ENCODE measurements at regions of chr12 and their contacts with region 1.

Region 1: DNA sequence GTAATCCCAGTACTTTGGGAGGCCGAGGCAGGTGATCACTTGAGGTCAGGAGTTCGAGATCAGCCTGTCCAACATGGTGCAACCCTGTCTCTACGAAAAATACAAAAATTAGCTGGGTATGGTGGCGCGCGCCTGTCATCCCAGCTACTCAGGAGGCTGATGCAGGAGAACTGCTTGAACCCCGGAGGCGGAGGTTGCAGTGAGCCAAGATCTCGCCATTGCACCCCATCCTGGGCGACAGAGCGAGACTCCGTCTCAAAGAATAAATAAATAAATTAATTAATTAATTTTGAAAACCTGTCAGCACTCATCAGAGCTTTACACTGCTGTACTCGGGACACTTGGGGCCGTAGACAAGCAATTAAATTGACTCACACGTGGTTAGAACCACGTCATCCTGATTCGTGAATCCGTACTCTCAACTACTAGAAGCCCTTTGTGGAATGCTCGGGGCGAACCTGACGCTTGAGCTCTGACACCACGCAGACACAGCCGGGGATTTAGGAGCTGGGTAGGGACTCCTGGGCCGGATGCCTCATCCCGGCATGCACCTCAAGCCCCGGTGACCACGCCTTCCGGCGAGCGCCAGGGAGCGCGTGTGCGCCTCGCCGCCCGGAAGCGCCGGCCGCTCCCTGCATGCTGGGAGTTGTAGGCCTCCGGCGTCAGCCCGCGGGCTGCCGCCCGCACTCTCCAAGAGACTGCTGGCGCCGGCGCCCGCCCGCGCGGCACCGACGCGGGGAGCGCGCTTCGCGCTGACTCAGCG is at the start of gene XPOT:
- DNase-seq: peak; percentile 93 to 95
- ATAC-seq: peak; percentile 96 to 99 (median 98)
- H3K4me3 ChIP-seq: peak within 1 kb of the TSS; percentile 68 to 100 (median 96)
- H3K27ac ChIP-seq: peak within 1 kb of the TSS; percentile 84 to 99 (median 97)
- H3K4me1 ChIP-seq: peaks cover 0 to 22% (median 9%) of the 10 kb centered on the region in 9 donors
- H3K27me3 ChIP-seq: no peaks in the 10 kb centered on the region
- CTCF ChIP-seq: peak in 1 of 9 donors; percentile 22
- total RNA-seq, gene XPOT: 15.2 to 31.6 (median 20.1) TPM

Region 2: DNA sequence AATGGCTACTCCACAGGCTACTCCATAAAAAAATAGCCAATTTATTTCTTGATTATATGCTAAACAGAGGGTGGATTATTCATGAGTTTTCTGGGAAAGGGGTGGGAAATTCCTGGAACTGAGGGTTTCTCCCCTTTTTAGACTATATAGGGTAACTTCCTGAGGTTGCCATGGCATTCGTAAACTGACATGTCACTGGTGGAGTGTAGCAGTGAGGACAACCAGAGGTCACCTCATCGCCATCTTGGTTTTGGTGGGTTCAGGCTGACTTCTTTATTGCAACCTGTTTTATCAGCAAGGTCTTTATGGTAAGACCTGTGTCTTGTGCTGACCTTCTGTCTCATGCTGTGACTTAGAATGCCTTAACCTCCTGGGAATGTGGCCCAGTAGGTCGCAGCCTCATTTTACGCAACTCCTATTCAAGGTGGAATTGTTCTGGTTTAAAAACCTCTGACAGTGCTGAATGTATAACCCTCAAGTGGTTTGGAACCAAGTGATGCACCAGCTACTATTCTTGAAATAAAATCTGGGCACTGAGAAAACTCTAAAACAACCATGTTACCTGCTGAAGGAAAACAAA is 41.1 kb before region 1 on chr12:
- intact Hi-C with region 1: no loop called
- DNase-seq: no peak
- ATAC-seq: no peak
- H3K4me3 ChIP-seq: no peak overlapping the region
- H3K27ac ChIP-seq: no peak overlapping the region
- H3K4me1 ChIP-seq: no peaks in the 10 kb centered on the region
- H3K27me3 ChIP-seq: no peaks in the 10 kb centered on the region
- CTCF ChIP-seq: no peak

Region 3: GRCh38 chr12:64440100-64440499 is 36.2 kb after region 1 on chr12:
- intact Hi-C with region 1: loop called in 1 of 10 experiments (anchors 5 kb)
- DNase-seq: no peak
- ATAC-seq: no peak
- H3K4me3 ChIP-seq: no peak overlapping the region
- H3K27ac ChIP-seq: no peak overlapping the region
- H3K4me1 ChIP-seq: no peaks in the 10 kb centered on the region
- H3K27me3 ChIP-seq: no peaks in the 10 kb centered on the region
- CTCF ChIP-seq: no peak

Region 4: GRCh38 chr12:64451687-64452558 is 48.0 kb after region 1 on chr12 and contains the start of gene TBK1:
- intact Hi-C with region 1: loop called in 1 of 10 experiments (anchors 5 kb)
- DNase-seq: peak; percentile 84 to 93
- ATAC-seq: peak; percentile 95 to 99 (median 97)
- H3K4me3 ChIP-seq: peak within 1 kb of the TSS; percentile 75 to 98 (median 92)
- H3K27ac ChIP-seq: peak within 1 kb of the TSS; percentile 92 to 98 (median 96)
- H3K4me1 ChIP-seq: peaks cover 0 to 46% (median 26%) of the 10 kb centered on the region in 9 donors
- H3K27me3 ChIP-seq: no peaks in the 10 kb centered on the region
- CTCF ChIP-seq: peak in 3 of 9 donors; percentile 16 to 45 (median 35)
- total RNA-seq, gene TBK1: 9.0 to 15.1 (median 10.5) TPM